K562 (cell line): ENCODE measurements at regions of chr3 and their contacts with region 1.

Region 1: DNA sequence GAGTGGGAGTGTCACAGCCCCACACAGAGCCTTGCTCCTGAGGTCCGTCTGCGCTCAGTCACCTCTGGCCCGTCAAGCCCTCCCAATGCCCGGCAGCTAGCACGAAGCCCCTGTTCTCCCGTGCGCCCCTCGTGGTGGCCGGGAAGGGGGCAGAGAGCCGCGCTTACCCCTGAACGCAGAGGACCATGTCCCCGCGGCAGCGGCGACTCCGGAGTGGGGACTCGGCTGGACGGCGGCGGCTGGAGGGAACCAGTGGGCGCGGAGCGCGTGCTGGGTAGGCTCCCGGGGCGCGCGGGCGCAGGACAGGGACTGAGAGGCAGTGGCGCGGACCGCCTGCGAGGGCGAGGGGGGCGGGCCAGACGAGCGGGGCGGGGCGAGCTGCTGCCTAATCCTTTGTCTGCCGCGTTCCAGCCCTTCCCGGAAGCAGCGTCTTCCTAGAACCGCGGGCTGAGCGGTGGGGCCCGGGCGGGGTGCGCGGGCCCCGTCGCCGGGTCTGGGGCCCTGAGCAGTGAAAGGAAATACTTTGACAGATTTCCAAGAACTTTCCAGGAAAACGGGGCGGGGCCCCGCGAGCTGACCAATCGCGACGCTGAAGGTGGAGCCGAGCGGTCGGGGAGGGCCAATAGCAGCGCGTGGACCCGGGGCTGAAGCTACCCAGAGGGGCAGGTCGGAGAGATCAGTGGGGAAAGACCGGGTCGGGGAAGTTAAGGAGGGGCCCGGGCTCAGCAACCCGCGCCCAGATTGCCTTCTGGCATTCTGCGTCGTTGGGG is at the start of gene CISH:
- DNase-seq: peak; percentile 84 to 97 (median 90)
- ATAC-seq: peak; percentile 85
- H3K4me3 ChIP-seq: peak within 1 kb of the TSS; percentile 87
- H3K27ac ChIP-seq: peak within 1 kb of the TSS; percentile 85
- H3K4me1 ChIP-seq: peaks cover 21 to 39% of the 10 kb centered on the region in 2 experiments; a peak in 4 of 5 replicates
- H3K27me3 ChIP-seq: no peaks in the 10 kb centered on the region
- CTCF ChIP-seq: peak; percentile 18 to 52 (median 39); a peak in 5 of 6 replicates
- EP300 ChIP-seq: peak; percentile 32
- POLR2A ChIP-seq: peak; percentile 81
- RAD21 ChIP-seq: no peak; a peak in 1 of 4 replicates
- polyA plus RNA-seq, gene CISH: 1.7 to 3.5 TPM

Region 2: GRCh38 chr3:50358911-50359759 is 252.5 kb before region 1 on chr3 and contains the start of gene TMEM115:
- CTCF ChIA-PET with region 1: no interaction called
- POLR2A ChIA-PET with region 1: no interaction called
- in situ Hi-C with region 1: no loop called
- intact Hi-C with region 1: loop called (anchors 5 kb)
- DNase-seq: peak; percentile 88 to 96 (median 92)
- ATAC-seq: peak; percentile 97
- H3K4me3 ChIP-seq: peak within 1 kb of the TSS; percentile 62
- H3K27ac ChIP-seq: peak within 1 kb of the TSS; percentile 78
- H3K4me1 ChIP-seq: peaks cover 29 to 39% of the 10 kb centered on the region in 2 experiments; a peak in 4 of 5 replicates
- H3K27me3 ChIP-seq: no peaks in the 10 kb centered on the region
- CTCF ChIP-seq: no peak
- EP300 ChIP-seq: no peak
- POLR2A ChIP-seq: peak; percentile 63; the same call in 1 of the 2 replicates
- RAD21 ChIP-seq: no peak
- polyA plus RNA-seq, gene TMEM115: 1.6 to 2.7 TPM

Region 3: DNA sequence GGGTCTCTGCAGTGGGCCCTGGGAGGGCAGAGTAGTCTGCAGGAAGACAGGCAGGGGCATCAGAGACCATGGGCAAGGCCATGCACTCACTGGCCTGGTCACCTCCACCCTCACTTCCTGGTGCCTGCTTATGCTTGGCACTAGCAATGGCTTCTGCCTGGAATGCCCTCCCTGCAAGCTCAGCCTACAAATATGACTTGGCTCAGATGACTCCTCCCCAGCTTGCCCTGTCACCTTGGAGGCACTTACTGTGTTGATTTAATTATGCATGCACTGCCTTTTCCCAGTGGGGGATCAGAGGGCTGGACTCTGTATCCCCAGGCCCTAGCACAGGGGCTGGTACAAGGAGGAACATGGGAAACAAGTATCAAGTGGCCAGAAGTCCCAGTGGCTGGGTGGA is 51.9 kb before region 1 on chr3:
- CTCF ChIA-PET with region 1: no interaction called
- POLR2A ChIA-PET with region 1: no interaction called
- in situ Hi-C with region 1: no loop called
- intact Hi-C with region 1: no loop called
- DNase-seq: no peak
- ATAC-seq: no peak
- H3K4me3 ChIP-seq: no peak overlapping the region
- H3K27ac ChIP-seq: no peak overlapping the region
- H3K4me1 ChIP-seq: no peaks in the 10 kb centered on the region; a peak in 1 of 5 replicates
- H3K27me3 ChIP-seq: no peaks in the 10 kb centered on the region
- CTCF ChIP-seq: no peak
- EP300 ChIP-seq: no peak
- POLR2A ChIP-seq: no peak
- RAD21 ChIP-seq: no peak

Region 4: GRCh38 chr3:50575372-50575771 is 36.3 kb before region 1 on chr3:
- CTCF ChIA-PET with region 1: interaction called, 56 read pairs
- POLR2A ChIA-PET with region 1: interaction called, 10 read pairs
- in situ Hi-C with region 1: loop called (anchors 5 kb)
- intact Hi-C with region 1: loop called (anchors 1 kb)
- DNase-seq: no peak
- ATAC-seq: no peak
- H3K4me3 ChIP-seq: no peak overlapping the region
- H3K27ac ChIP-seq: no peak overlapping the region; the same call in 2 of the 3 replicates
- H3K4me1 ChIP-seq: peaks cover 41 to 55% of the 10 kb centered on the region in 2 experiments; a peak in 4 of 5 replicates
- H3K27me3 ChIP-seq: no peaks in the 10 kb centered on the region
- CTCF ChIP-seq: no peak
- EP300 ChIP-seq: no peak
- POLR2A ChIP-seq: no peak
- RAD21 ChIP-seq: no peak

Region 5: DNA sequence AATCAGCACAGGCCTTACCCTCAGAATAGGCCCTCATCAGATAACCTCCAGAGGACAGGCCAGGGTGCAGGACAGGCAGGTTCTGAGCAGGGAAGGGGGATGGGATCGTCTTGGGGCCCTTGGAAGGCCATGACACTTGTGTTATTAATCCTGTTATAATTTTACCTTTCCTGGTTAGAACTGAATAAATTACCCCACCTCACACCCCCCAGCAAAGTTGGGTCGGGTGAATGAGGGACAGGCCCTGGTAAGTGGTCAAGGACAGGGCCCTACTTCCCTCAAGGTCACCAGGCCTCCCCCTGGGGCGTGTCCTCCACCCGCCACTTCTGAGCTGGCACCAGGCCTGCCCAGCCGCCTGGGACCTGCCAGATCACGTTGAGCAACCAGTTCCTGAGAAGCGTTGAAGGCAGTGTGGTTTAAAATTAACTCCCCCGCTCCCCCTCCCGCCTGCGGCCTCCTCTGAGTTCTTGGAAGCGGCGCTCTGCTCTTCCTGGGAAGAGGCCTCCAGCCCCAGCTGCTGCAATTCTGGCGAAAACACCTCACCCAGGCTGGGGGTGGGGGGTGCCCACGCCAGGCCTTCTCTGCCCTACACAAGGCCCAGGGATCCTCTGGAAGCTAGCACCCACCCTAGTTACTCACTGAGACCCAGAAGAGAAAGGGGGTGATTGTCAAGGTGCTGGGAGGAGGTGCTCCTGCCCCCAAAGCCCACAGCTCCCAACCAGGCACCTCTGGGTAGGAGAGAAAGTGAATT is 10.6 kb before region 1 on chr3:
- CTCF ChIA-PET with region 1: interaction called, 4 read pairs
- POLR2A ChIA-PET with region 1: interaction called, 8 read pairs
- in situ Hi-C with region 1: no loop called
- intact Hi-C with region 1: loop called (anchors 1 kb)
- DNase-seq: peak; percentile 66 to 94 (median 75)
- ATAC-seq: peak; percentile 72
- H3K4me3 ChIP-seq: no peak overlapping the region; the same call in 1 of the 2 replicates
- H3K27ac ChIP-seq: peak overlapping the region; percentile 96
- H3K4me1 ChIP-seq: peaks cover 58 to 74% of the 10 kb centered on the region in 2 experiments
- H3K27me3 ChIP-seq: no peaks in the 10 kb centered on the region
- CTCF ChIP-seq: no peak
- EP300 ChIP-seq: peak; percentile 86
- POLR2A ChIP-seq: no peak
- RAD21 ChIP-seq: peak in 1 of 2 experiments; percentile 9; a peak in 1 of 4 replicates

Region 6: DNA sequence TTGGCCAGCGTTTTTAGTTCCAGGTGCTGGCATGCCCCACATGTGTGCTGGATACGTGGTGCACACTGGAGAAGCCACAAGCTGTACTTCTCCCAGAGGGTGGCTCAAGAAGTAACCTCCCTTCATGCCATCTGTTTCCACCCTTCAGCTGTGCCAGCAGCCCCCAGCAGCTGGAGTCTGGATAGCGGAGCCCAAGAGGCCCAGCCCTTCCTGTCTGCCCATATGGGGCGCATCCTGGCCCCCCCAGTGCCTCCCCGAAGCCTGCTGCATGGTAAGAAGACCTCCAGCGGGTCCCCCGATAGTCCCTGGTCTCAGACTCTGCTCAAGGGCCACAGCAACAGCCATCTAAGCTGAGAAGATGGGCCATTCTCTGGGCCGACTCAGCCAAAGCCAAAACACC is 767.7 kb after region 1 on chr3:
- CTCF ChIA-PET with region 1: no interaction called
- POLR2A ChIA-PET with region 1: no interaction called
- in situ Hi-C with region 1: loop called (anchors 5 kb)
- intact Hi-C with region 1: loop called (anchors 10 kb)
- DNase-seq: no peak
- ATAC-seq: no peak
- H3K4me3 ChIP-seq: no peak overlapping the region
- H3K27ac ChIP-seq: no peak overlapping the region
- H3K4me1 ChIP-seq: peaks cover 0 to 2% of the 10 kb centered on the region in 2 experiments; a peak in 3 of 5 replicates
- H3K27me3 ChIP-seq: peaks cover 10 to 43% of the 10 kb centered on the region in 2 experiments
- CTCF ChIP-seq: no peak
- EP300 ChIP-seq: no peak
- POLR2A ChIP-seq: no peak
- RAD21 ChIP-seq: no peak